ENCODE measurements at regions of chr14 and their contacts with region 1.

Region 1: DNA sequence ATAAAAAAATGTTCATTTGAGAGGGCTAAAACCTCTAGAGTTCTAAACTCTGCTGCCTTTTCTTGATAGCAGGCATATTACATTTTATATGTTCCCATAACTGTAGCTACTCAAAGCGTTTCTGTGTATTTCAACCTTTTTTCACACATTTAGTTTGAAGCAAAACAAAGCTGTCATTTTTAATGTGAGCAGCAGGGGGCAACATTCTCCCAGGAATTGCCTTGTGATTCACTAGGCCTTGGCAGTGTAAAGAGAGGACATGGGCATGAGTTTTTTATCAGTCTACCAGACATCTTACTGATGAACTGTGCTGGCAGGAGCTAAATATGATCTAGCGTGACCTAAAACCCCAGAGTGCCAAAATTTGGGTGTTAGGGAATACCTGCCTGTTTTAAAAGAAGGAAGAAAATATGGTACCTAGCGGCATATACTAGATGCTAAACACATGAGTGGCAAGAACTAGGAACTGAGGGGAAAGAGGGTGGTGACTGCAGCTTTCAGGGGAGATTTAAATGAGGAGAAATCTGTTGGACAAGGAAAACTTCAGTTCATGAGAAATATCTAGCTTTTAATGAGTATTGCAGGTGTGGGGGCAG is 65.3 kb downstream of the IFT43 start:
- DNase-seq: no peak
- ATAC-seq: peak; percentile 49
- H3K4me3 Mint-ChIP-seq: no peak overlapping the region
- H3K27ac Mint-ChIP-seq: no peak overlapping the region
- H3K4me1 Mint-ChIP-seq: peaks cover 5% of the 10 kb centered on the region
- H3K27me3 Mint-ChIP-seq: no peaks in the 10 kb centered on the region
- CTCF ChIP-seq: no peak

Region 2: GRCh38 chr14:75709207-75709812 is 341.6 kb before region 1 on chr14:
- CTCF ChIA-PET with region 1: interaction called, 14 read pairs
- POLR2A ChIA-PET with region 1: no interaction called
- intact Hi-C with region 1: no loop called
- DNase-seq: no peak
- ATAC-seq: peak; percentile 70
- H3K4me3 Mint-ChIP-seq: no peak overlapping the region
- H3K27ac Mint-ChIP-seq: no peak overlapping the region
- H3K4me1 Mint-ChIP-seq: no peaks in the 10 kb centered on the region
- H3K27me3 Mint-ChIP-seq: no peaks in the 10 kb centered on the region
- CTCF ChIP-seq: peak; percentile 58

Region 3: DNA sequence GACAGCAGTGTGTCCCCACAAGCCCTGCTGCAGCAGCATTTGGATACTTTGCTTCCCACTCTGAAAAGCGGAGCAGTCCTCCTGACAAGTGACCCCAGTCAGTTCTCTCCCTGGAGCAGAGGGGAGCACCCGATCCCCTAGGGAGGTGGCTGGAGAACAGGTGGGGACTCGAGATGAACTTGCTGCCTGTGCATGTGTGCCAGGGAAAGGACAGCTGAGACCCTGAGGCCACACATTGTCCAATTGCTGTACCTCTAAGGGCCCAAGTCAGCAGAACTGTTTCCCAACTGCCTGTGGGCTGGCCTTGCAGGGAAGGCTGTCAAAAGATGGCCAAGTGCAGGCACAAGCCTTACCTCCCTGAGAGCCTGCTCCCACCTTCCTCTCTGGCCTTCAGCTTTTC is 10.2 kb before region 1 on chr14:
- CTCF ChIA-PET with region 1: interaction called, 11 read pairs
- POLR2A ChIA-PET with region 1: no interaction called
- intact Hi-C with region 1: no loop called
- DNase-seq: no peak
- ATAC-seq: no peak
- H3K4me3 Mint-ChIP-seq: no peak overlapping the region
- H3K27ac Mint-ChIP-seq: no peak overlapping the region
- H3K4me1 Mint-ChIP-seq: no peaks in the 10 kb centered on the region
- H3K27me3 Mint-ChIP-seq: no peaks in the 10 kb centered on the region
- CTCF ChIP-seq: no peak

Region 4: GRCh38 chr14:76063327-76063726 is 12.4 kb after region 1 on chr14:
- CTCF ChIA-PET with region 1: no interaction called
- POLR2A ChIA-PET with region 1: no interaction called
- intact Hi-C with region 1: no loop called
- DNase-seq: no peak
- ATAC-seq: no peak
- H3K4me3 Mint-ChIP-seq: no peak overlapping the region
- H3K27ac Mint-ChIP-seq: no peak overlapping the region
- H3K4me1 Mint-ChIP-seq: no peaks in the 10 kb centered on the region
- H3K27me3 Mint-ChIP-seq: no peaks in the 10 kb centered on the region
- CTCF ChIP-seq: no peak

Region 5: DNA sequence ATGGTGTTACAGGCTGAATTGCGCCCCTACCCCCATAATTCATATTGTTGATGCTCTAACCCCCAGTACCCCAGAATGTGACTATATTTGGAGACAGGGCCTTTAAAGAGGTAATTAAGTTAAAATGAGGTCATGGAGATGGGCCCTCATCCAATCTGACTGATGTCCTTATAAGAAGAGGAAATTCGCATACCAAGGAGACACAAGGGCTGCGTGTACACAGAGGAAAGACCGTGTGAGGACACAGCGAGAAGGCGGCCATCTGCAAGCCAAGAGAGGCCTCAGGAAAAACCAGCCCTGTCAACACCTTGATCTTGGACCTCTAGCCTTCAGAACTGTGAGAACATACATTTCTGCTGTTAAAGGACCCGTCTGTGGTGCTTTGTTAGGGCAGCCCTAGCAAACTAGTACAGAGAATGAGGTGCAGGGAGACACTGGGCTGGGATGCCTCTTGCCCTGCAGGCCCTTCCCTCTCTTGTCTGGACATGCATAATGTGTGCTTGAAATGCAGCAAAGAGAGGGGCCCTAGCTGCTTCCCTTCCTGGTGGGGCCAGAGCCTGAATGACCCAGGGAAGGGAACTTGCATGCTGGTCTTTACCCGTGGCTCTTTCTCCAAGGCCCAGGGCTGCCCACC is 50.6 kb after region 1 on chr14:
- CTCF ChIA-PET with region 1: no interaction called
- POLR2A ChIA-PET with region 1: no interaction called
- intact Hi-C with region 1: no loop called
- DNase-seq: no peak
- ATAC-seq: no peak
- H3K4me3 Mint-ChIP-seq: no peak overlapping the region
- H3K27ac Mint-ChIP-seq: no peak overlapping the region
- H3K4me1 Mint-ChIP-seq: no peaks in the 10 kb centered on the region
- H3K27me3 Mint-ChIP-seq: peaks cover 18% of the 10 kb centered on the region
- CTCF ChIP-seq: no peak

Region 6: DNA sequence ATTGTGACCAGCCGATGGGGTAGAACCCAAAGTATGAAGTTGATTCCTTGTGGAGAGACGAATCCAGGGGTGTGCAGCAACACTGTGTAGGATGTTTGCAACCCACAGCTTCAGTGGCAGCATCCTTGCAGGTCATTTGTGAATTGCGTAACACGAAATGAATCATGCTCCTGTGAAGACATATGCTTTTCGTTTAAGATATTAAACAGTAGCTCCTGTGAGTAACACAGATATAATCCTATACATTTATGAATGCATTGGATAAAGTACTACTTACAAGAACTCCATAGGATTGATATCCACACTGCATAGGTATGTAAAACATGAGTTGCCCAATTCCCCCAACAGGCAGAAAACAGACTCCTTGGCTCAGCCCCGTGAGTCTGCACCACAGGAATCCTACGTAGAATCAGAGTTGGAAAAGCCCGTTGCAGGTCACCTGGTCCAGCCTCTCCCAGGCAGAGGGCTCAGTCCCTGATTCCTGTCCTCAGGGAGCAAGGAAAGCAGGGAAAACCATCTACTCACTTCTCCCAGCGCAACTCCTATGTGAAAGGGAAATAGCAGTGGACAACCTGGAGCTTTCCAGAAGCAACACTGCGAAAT is 176.7 kb after region 1 on chr14:
- CTCF ChIA-PET with region 1: no interaction called
- POLR2A ChIA-PET with region 1: no interaction called
- intact Hi-C with region 1: no loop called
- DNase-seq: no peak
- ATAC-seq: no peak
- H3K4me3 Mint-ChIP-seq: no peak overlapping the region
- H3K27ac Mint-ChIP-seq: no peak overlapping the region
- H3K4me1 Mint-ChIP-seq: no peaks in the 10 kb centered on the region
- H3K27me3 Mint-ChIP-seq: peaks cover 2% of the 10 kb centered on the region
- CTCF ChIP-seq: no peak

Region 7: GRCh38 chr14:76352639-76353281 is 301.9 kb after region 1 on chr14:
- CTCF ChIA-PET with region 1: interaction called, 101 read pairs
- POLR2A ChIA-PET with region 1: no interaction called
- intact Hi-C with region 1: loop called (anchors 1 kb)
- DNase-seq: peak; percentile 53
- ATAC-seq: no peak
- H3K4me3 Mint-ChIP-seq: peak overlapping the region; percentile 21
- H3K27ac Mint-ChIP-seq: no peak overlapping the region
- H3K4me1 Mint-ChIP-seq: peaks cover 2% of the 10 kb centered on the region
- H3K27me3 Mint-ChIP-seq: peaks cover 39% of the 10 kb centered on the region
- CTCF ChIP-seq: no peak

Region 8: DNA sequence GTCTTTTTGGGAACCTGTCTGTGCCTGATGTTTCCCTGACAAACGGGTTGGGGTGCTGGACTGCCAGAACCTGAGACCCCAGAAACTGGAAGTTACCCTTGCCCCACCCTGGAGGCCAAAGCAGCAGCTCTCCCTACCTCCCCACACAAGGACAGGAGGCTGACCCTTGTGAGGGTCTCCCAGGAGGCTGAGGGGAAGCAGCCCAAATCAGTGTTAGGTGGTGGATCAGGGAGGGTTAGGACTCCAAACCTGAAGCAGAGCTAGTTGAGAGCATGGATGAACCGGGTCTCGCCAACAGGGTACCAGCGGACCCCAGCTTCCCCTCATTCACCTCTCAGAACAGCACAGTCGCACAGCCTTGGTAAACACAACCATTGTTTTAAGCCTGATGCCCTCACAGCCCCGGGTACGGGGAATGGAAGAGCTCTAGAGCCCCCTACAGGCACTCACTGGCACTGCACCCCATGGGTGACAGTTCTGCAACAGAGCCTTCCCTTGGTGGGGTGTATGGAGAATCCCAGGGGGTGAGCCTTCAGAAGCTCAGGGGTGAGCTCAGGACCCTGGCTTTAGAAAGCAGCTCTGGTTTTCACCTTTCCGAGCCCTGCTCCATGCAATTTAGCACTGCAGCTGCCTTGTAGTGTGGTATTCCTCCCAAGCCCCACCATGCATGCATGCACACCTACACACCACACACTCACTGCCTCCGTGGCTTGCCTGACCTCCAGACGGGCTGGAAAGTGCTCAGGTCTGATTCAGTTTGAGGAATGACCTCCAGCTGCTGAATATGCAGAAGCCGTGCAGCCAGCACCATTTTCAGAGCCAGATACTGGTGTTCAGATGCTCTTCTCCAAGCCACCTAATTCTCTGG is 336.3 kb after region 1 on chr14:
- CTCF ChIA-PET with region 1: interaction called, 3 read pairs
- POLR2A ChIA-PET with region 1: no interaction called
- intact Hi-C with region 1: loop called (anchors 1 kb)
- DNase-seq: peak; percentile 28
- ATAC-seq: peak; percentile 65
- H3K4me3 Mint-ChIP-seq: no peak overlapping the region
- H3K27ac Mint-ChIP-seq: no peak overlapping the region
- H3K4me1 Mint-ChIP-seq: no peaks in the 10 kb centered on the region
- H3K27me3 Mint-ChIP-seq: peaks cover 52% of the 10 kb centered on the region
- CTCF ChIP-seq: no peak

Region 9: GRCh38 chr14:76647697-76648298 is 596.9 kb after region 1 on chr14:
- CTCF ChIA-PET with region 1: interaction called, 10 read pairs
- POLR2A ChIA-PET with region 1: no interaction called
- intact Hi-C with region 1: no loop called
- DNase-seq: no peak
- ATAC-seq: peak; percentile 28
- H3K4me3 Mint-ChIP-seq: no peak overlapping the region
- H3K27ac Mint-ChIP-seq: no peak overlapping the region
- H3K4me1 Mint-ChIP-seq: no peaks in the 10 kb centered on the region
- H3K27me3 Mint-ChIP-seq: peaks cover 21% of the 10 kb centered on the region
- CTCF ChIP-seq: no peak

Region 10: DNA sequence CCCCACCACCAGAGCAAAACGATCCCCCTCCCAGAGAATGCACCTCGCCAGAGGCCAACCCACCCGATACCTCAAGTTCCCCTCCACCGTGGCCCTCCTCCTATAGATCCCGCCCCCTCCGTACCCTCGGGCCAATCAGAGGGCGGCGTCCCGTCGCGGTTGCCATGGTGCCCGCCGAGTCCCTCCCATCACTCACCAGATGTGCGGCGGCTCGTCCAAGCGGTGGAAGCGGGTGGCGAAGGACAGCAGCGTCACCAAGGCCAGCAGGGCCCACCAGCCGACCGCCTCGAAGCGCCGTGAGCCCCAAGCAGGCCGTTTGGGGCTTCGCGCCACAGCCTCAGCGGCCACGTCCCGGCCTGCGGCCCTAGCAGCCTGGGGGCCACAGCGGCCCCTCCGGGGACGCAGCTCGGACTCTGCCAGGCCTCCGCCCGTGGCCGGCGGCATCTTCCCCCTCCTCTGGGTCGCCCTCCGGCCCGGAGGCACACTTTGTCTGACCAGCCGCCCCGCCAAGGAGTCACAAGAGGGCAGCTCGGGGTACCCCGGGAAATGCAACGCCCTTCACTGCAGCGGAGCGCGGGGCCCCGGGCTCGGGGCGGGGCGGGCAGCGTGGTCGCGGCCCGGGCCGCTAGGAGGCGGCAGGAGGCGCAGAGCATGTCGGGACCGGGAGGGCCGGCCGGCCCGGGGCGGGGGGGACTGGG is 1269.5 kb after region 1 on chr14 and contains the start of gene POMT2:
- CTCF ChIA-PET with region 1: no interaction called
- POLR2A ChIA-PET with region 1: no interaction called
- intact Hi-C with region 1: no loop called
- DNase-seq: peak; percentile 93
- ATAC-seq: peak; percentile 54
- H3K4me3 Mint-ChIP-seq: peak within 1 kb of the TSS; percentile 99
- H3K27ac Mint-ChIP-seq: peak within 1 kb of the TSS; percentile 100
- H3K4me1 Mint-ChIP-seq: peaks cover 19% of the 10 kb centered on the region
- H3K27me3 Mint-ChIP-seq: no peaks in the 10 kb centered on the region
- CTCF ChIP-seq: no peak
- total RNA-seq, gene POMT2: 28.7 and 30.8 TPM in 2 replicates

Measured in activated B cell treated with CpG ODN at 0.5 μM for 24 hours (primary cell).